Activated CD8-positive, alpha-beta T cell treated with anti-CD3 and anti-CD28 coated beads for 36 hours (primary cell): ENCODE measurements at regions of chr2 and their contacts with region 1.

Region 1: DNA sequence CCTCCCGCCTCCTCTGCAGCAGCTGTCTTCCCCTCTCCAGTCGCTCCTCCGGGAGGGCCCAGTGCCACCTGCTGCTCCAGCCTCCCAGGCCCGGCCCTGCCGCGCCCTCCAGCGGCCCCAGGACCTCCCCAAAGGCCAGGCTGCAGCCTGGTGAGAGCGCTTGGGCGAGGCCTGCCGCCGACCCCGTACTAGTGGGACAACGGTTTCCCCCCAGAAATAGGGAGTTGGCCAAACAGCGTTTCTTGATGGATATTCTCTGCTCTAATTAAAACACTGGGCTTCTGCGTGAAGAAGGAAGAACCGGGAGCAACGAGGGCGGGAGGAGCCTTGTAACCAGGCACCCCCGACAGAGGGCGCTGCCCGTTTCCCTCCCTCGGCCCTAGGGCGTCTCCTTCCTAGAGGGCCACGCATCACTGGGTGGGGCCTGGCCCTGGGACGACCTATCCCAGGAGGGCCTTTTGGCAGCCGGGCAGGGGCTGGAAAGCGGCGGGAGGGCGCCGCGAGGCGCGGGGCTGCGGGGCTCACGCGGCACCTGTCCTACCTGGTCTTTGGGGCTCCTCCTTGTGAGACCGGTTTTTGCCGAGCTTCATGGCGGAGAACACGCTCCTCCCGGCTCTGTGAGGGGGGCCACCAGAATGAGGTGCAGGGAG is 25.4 kb upstream of the OTOF start:
- DNase-seq: peak; percentile 89
- ATAC-seq: peak; percentile 99
- H3K4me3 Mint-ChIP-seq: peak overlapping the region; percentile 71
- H3K27ac Mint-ChIP-seq: peak overlapping the region; percentile 76
- H3K4me1 Mint-ChIP-seq: peaks cover 7% of the 10 kb centered on the region
- H3K27me3 Mint-ChIP-seq: peaks cover 1% of the 10 kb centered on the region
- CTCF ChIP-seq: peak; percentile 98

Region 2: GRCh38 chr2:26487192-26487591 is 16.2 kb before region 1 on chr2:
- CTCF ChIA-PET with region 1: interaction called, 13 read pairs
- POLR2A ChIA-PET with region 1: no interaction called
- intact Hi-C with region 1: no loop called
- DNase-seq: peak; percentile 16
- ATAC-seq: peak; percentile 67
- H3K4me3 Mint-ChIP-seq: no peak overlapping the region
- H3K27ac Mint-ChIP-seq: no peak overlapping the region
- H3K4me1 Mint-ChIP-seq: no peaks in the 10 kb centered on the region
- H3K27me3 Mint-ChIP-seq: no peaks in the 10 kb centered on the region
- CTCF ChIP-seq: no peak

Region 3: GRCh38 chr2:26521054-26521912 is 17.9 kb after region 1 on chr2:
- CTCF ChIA-PET with region 1: interaction called, 11 read pairs
- POLR2A ChIA-PET with region 1: interaction called, 3 read pairs
- intact Hi-C with region 1: no loop called
- DNase-seq: peak; percentile 27
- ATAC-seq: no peak
- H3K4me3 Mint-ChIP-seq: no peak overlapping the region
- H3K27ac Mint-ChIP-seq: no peak overlapping the region
- H3K4me1 Mint-ChIP-seq: peaks cover 14% of the 10 kb centered on the region
- H3K27me3 Mint-ChIP-seq: no peaks in the 10 kb centered on the region
- CTCF ChIP-seq: peak; percentile 28

Region 4: DNA sequence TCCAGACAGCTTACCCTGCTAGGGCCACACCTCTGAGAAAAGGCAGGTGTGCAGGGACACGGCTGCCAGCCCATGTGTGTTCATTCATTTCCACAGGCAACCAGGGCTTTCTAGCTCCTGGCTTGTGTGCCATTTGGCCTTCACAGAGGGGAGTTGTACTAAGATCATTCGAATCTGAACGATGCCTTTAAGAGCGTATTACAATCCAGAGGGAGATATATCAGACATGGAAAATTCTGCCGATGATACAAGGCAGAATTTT is 38.8 kb after region 1 on chr2:
- CTCF ChIA-PET with region 1: interaction called, 13 read pairs
- POLR2A ChIA-PET with region 1: no interaction called
- intact Hi-C with region 1: no loop called
- DNase-seq: no peak
- ATAC-seq: no peak
- H3K4me3 Mint-ChIP-seq: no peak overlapping the region
- H3K27ac Mint-ChIP-seq: no peak overlapping the region
- H3K4me1 Mint-ChIP-seq: no peaks in the 10 kb centered on the region
- H3K27me3 Mint-ChIP-seq: no peaks in the 10 kb centered on the region
- CTCF ChIP-seq: no peak

Region 5: DNA sequence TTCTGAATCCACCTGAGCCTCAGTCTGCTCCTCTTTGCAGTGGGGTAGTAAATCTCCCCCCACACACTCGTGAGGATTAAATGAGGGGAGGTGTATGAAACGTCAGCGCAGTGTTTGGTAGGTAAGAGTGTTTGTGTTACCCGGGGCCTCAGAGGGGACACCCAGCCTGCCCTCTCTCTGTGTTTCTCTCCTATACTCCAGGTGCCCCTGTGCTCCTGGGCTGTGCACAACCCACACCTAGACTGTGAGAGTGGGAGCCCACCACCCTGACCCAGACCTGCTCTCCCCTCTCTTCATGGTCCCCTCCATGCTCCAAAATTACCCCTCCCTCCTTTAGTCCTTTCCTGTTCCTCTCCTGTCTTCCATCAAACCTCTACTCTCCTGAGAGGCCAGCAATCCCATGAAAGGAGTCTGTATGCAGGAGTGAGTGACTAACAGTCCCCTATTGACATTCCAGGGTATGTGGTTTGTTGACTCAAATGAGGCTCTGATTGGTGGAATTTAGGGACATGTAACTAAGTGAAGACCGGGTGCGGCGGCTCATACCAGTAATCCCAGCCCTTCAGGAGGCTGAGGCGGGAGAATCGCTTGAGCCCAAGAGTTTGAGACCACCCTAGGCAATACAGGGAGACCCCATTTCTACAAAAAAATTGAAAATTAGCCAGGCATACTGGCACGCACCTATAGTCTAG is 127.5 kb after region 1 on chr2:
- CTCF ChIA-PET with region 1: no interaction called
- POLR2A ChIA-PET with region 1: no interaction called
- intact Hi-C with region 1: no loop called
- DNase-seq: no peak
- ATAC-seq: no peak
- H3K4me3 Mint-ChIP-seq: no peak overlapping the region
- H3K27ac Mint-ChIP-seq: no peak overlapping the region
- H3K4me1 Mint-ChIP-seq: no peaks in the 10 kb centered on the region
- H3K27me3 Mint-ChIP-seq: no peaks in the 10 kb centered on the region
- CTCF ChIP-seq: no peak